Posterior cingulate gyrus (tissue), 11 donors: ENCODE measurements at regions of chr12 and their contacts with region 1.

Region 1: DNA sequence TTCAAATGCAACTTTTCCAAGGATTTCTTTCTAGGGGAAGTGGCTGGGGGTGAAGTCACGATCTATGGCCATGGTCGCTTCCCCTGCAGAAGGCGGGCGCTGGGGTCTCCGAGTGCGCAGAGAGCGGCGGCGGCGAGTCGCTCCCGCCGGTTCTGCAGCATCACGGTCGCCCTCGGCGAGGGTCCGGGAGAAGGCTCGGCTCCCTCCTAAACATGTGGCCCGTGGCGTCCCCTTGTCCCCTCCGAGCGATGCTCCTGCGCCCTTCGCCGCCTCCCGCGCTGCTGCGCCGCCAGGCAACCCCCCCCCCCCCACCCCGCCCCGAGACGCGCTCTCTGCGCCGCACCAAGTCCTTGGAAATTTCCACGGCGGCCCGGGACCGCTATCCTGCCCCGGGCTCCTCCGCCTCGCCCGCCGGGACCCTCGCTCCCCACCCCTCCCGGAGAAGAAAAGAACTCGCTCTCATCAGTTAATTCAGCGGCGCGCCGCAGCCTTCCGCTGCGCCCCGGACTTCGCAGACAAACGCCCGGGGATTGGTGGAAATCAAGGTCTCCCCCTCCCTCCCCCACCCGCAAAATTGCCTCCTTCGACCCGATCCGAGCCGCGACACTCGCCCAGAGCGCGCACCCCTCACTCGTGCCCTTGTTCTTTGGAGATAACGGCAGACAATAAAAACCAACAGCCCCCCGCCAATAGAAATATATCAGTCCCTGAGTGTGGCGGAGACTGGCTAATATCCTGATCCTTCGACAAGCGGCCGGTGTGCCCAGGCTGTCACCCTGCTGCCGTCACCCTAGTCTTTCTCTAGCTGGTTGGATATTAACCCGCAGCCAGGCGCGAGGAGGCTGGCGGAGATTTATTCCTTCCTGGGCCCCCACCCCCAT is at the start of gene ST8SIA1:
- DNase-seq: peak; percentile 30 to 91 (median 62)

Region 2: DNA sequence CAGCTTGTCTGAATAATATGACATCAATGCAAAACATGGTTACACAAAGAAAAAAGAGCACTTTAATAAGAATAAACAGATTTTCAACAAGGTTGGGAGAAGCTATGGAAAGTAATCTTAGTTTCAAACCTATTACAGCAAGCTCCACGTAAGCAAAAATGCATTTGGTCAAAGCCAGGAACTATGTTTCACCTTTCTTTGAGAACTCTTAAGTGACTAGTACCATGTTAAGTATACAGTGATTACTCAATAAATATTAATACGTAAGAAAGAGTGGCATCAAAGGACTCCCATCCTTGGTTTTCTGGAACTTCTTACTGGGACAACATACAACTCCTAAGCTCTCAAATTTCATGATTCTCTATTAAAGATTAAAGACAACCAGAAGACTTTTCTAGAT is 474.1 kb before region 1 on chr12:
- intact Hi-C with region 1: no loop called
- DNase-seq: no peak

Region 3: DNA sequence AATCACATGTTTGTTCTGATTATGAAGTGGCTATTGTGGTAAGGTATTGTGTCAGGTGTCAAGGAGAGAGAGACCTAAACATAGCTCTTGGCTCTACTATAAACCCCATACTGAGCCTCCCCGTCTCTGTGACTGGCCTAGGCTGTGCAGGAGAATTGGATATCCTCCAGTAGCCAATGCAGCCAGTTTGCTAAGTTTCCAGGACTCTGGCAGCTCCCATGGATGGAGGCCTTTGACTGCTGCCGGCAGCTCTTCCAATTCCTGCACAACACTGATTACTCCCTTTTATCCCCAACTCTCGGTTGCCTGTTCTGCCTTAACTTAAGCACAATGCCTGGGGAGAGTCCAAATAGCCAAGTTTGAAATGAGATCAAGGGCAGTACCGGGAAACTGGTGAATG is 452.7 kb before region 1 on chr12:
- intact Hi-C with region 1: no loop called
- DNase-seq: peak in 6 of 10 donors; percentile 8 to 68 (median 24)

Region 4: DNA sequence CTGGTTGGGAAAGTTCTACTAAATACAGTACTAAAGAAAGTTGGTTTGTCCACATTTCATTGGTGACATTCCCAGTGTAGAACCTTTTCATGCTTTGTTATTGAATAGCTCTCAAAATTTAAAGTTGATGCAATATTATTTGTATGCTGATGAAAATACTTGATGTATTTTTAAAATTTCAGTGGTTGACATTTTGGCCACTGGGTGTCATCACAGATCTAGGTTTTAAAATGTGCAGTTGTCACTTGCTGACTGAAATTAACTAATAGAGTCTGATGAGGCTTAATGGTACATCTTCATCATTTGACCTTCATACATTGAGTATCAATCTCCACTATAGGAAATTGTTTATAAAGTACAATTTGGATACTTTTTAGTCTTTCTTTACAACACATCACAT is 251.5 kb before region 1 on chr12:
- intact Hi-C with region 1: loop called (anchors 1 kb)
- DNase-seq: peak in 1 of 10 donors; percentile 26

Region 5: DNA sequence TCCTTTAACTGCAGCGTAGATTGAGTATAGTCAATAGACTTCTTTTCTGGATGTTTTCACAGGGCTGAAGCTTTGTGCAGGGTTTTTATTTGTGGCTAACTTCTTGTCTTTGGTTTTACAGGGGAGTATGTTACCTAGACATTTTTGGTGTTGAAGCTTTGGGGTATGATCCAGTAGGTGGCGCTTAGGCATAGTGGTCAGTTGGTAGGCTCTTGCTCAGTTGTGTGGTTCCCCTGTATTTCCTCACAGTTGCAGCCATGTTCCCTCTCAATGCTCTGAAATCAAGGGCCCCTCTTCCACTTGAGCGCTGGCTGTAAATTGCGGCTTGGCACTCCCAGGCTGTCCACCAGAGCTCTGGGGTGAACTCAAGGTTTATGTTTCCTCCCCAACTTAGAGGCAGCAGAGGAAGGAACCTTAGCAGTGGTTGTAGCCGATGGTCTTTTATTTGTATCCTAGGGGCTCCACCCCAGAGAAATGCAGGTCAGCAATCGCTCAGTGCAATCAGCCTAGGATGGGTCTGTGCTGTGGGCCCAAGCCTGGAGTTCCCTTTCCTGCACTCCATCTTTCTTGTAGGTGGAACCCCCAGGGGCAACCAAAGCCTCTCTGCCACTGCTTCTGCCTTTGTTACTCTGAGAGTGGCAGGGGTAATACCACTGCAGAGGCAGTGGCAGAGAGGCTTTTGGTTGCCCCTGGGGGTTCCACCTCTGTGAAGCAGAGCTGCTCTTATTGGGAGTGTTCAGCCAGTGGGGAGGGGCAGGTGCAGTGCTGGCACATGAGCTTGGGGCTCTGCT is 233.5 kb before region 1 on chr12:
- intact Hi-C with region 1: loop called (anchors 5 kb)
- DNase-seq: peak in 1 of 10 donors; percentile 27

Region 6: DNA sequence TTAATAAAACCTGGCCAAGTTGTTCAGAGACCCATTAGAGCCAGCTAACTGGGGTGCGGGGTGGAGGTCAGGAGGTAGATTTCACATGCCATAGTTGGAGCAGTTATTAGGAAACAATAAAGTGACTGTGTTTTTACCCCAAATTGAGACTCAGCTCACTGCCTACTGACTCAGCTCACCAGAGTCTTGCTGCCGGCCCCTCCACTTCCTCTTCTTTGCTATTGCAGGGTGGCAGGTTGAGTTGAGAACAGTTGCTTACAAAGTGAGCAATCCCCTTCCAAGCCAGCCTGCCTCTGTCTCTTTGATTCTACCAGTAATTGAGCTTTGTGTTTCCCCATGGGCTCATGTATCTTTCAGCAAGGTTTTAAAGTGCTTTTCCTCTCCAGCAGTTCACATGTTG is 13.0 kb before region 1 on chr12:
- intact Hi-C with region 1: no loop called
- DNase-seq: peak in 1 of 10 donors; percentile 76

Region 7: GRCh38 chr12:22443379-22444316 is 109.0 kb after region 1 on chr12:
- intact Hi-C with region 1: loop called (anchors 10 kb)
- DNase-seq: peak in 8 of 10 donors; percentile 18 to 88 (median 59)

Region 8: DNA sequence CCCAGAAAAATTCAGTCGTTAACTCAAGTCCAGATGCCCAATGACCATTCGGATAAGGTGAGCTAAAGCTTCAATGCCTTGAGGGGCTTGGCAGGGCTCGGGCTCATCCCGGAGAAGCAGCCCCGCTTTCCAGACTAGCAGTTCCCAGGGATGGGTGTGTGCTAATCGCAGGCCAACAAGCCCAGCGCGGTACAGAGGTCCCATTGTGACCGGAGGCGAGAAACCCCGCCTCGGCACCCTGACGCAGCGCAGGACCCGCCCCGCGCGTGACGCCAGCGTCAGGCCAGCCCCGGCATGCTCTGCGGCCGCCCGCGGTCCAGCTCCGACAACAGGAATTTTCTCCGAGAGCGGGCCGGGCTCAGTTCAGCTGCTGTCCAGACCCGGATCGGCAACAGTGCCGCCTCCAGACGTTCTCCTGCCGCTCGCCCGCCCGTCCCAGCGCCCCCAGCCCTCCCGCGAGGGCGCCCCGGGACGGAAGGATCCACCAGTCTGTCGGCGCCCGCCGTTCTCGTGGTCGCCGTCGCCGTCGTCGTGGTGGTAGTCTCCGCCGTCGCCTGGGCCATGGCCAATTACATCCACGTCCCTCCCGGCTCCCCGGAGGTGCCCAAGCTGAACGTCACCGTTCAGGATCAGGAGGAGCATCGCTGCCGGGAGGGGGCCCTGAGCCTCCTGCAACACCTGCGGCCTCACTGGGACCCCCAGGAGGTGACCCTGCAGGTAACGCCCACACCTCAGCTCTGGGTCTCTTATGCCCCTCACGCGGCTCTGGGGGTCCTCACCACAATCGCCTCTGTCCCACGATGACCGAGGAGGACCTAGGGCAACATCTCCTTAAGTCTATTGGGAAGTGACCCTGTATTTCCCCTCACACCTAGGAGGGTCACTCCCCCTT is 290.5 kb after region 1 on chr12 and contains the start of gene ETNK1:
- intact Hi-C with region 1: loop called (anchors 10 kb)
- DNase-seq: peak; percentile 94 to 100 (median 96)